ENCODE measurements at regions of chr1 and their contacts with region 1.

Region 1: DNA sequence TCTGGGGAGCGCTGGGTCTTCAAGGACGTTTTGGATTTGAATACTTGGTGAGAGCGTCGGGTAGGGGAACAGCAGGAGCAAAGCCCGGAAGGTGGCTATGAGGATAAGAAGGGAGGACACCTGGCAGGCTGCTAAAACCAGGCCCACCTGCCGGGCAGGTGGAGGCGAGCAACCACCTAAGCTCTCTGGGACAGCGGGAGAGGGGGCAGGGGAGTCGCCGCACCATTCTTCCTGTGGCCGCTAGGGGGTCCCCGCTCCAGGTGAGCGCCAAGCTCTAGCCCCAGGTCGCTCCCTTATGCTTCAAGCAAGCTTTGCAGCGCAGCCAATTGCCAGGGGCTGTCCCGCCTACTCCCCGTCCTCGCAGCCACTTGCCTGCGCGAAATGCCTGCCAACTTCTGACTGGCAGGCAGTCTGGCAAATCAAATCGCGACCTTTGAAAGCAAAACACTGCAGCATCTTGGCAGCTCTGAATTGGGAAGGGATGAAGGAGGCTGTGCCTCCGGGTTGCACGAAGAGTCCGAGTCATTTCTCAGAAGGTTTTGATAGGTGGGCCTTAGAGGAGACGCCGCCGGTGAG is at the start of gene NIPAL3:
- DNase-seq: peak; percentile 95 to 99 (median 96)
- H3K4me3 ChIP-seq: peak within 1 kb of the TSS; percentile 73
- H3K4me3 Mint-ChIP-seq: peak within 1 kb of the TSS; percentile 91 to 100 (median 97)
- H3K27ac ChIP-seq: peak within 1 kb of the TSS; percentile 27
- H3K27ac Mint-ChIP-seq: peak within 1 kb of the TSS; percentile 46 to 97 (median 92)
- H3K4me1 ChIP-seq: peaks cover 52% of the 10 kb centered on the region
- H3K4me1 Mint-ChIP-seq: peaks cover 51 to 77% (median 75%) of the 10 kb centered on the region in 3 donors
- H3K27me3 ChIP-seq: no peaks in the 10 kb centered on the region
- H3K27me3 Mint-ChIP-seq: no peaks in the 10 kb centered on the region
- total RNA-seq, gene NIPAL3: 31.3 to 33.2 TPM

Region 2: DNA sequence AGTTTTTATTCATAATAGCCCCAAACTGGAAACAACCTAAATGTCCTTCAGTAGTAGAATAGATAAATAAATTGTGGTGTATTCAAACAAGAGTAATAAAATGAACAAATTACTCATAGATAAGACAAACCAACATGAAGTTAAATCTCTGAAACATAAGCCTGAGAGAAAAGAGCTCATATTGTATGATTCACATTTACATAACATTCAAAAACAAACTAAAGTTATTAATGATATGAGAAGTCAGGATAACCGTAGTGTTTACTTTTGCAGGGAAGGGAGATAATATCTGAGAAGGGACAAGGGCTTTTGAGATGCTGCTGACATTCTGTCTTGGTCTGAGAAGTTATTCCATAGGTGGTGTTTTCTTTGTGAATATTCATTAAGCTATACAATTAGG is 15.3 kb before region 1 on chr1:
- CTCF ChIA-PET with region 1: interaction called, 12 read pairs
- POLR2A ChIA-PET with region 1: no interaction called
- DNase-seq: no peak
- H3K4me3 ChIP-seq: no peak overlapping the region
- H3K4me3 Mint-ChIP-seq: no peak overlapping the region
- H3K27ac ChIP-seq: no peak overlapping the region
- H3K27ac Mint-ChIP-seq: peak overlapping the region in 2 of 8 donors; percentile 14 to 91
- H3K4me1 ChIP-seq: no peaks in the 10 kb centered on the region
- H3K4me1 Mint-ChIP-seq: no peaks in the 10 kb centered on the region
- H3K27me3 ChIP-seq: no peaks in the 10 kb centered on the region
- H3K27me3 Mint-ChIP-seq: no peaks in the 10 kb centered on the region

Region 3: GRCh38 chr1:24481101-24481500 is 65.7 kb after region 1 on chr1:
- CTCF ChIA-PET with region 1: interaction called, 10 read pairs
- POLR2A ChIA-PET with region 1: interaction called, 7 read pairs
- DNase-seq: peak; percentile 6 to 77 (median 52)
- H3K4me3 ChIP-seq: peak overlapping the region; percentile 32
- H3K4me3 Mint-ChIP-seq: peak overlapping the region; percentile 44 to 84 (median 83)
- H3K27ac ChIP-seq: peak overlapping the region; percentile 32
- H3K27ac Mint-ChIP-seq: peak overlapping the region; percentile 94 to 99 (median 98)
- H3K4me1 ChIP-seq: peaks cover 64% of the 10 kb centered on the region
- H3K4me1 Mint-ChIP-seq: peaks cover 50 to 65% (median 51%) of the 10 kb centered on the region in 3 donors
- H3K27me3 ChIP-seq: no peaks in the 10 kb centered on the region
- H3K27me3 Mint-ChIP-seq: peaks cover 0 to 2% of the 10 kb centered on the region in 2 donors

Region 4: GRCh38 chr1:24526940-24527542 is 111.6 kb after region 1 on chr1:
- CTCF ChIA-PET with region 1: interaction called, 50 read pairs
- POLR2A ChIA-PET with region 1: no interaction called
- DNase-seq: peak; percentile 8 to 54 (median 34)
- H3K4me3 ChIP-seq: no peak overlapping the region
- H3K4me3 Mint-ChIP-seq: no peak overlapping the region
- H3K27ac ChIP-seq: no peak overlapping the region
- H3K27ac Mint-ChIP-seq: peak overlapping the region in 6 of 8 donors; percentile 61 to 93 (median 74)
- H3K4me1 ChIP-seq: peaks cover 40% of the 10 kb centered on the region
- H3K4me1 Mint-ChIP-seq: peaks cover 32 to 72% (median 62%) of the 10 kb centered on the region in 3 donors
- H3K27me3 ChIP-seq: no peaks in the 10 kb centered on the region
- H3K27me3 Mint-ChIP-seq: no peaks in the 10 kb centered on the region

Region 5: DNA sequence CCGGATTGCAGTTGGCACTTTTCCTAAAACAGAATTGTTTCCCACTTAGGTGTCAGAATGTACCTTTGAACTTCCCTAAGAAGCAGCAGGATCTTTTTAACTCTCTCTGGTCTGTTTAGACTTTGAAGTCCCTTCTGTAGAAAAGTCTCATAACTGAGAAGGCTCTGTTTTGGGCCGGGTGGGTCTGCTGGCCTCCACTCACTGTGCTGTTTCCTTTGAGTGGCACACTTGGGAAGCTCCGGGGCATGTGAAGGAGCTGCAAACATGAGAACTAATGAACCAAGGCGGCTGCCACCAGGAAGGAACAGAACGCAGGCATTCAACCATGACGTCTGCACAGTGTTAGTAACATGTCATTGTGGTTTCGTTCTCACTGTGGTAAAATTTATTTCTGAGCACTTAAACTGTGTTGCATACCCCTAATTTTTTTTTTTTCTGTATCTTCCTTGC is 121.0 kb after region 1 on chr1:
- CTCF ChIA-PET with region 1: interaction called, 23 read pairs
- POLR2A ChIA-PET with region 1: interaction called, 7 read pairs
- DNase-seq: peak; percentile 58 to 89 (median 86)
- H3K4me3 ChIP-seq: peak overlapping the region; percentile 30
- H3K4me3 Mint-ChIP-seq: peak overlapping the region; percentile 81 to 90 (median 84)
- H3K27ac ChIP-seq: peak overlapping the region; percentile 49
- H3K27ac Mint-ChIP-seq: peak overlapping the region; percentile 96 to 100 (median 99)
- H3K4me1 ChIP-seq: peaks cover 33% of the 10 kb centered on the region
- H3K4me1 Mint-ChIP-seq: peaks cover 57 to 81% (median 72%) of the 10 kb centered on the region in 3 donors
- H3K27me3 ChIP-seq: no peaks in the 10 kb centered on the region
- H3K27me3 Mint-ChIP-seq: no peaks in the 10 kb centered on the region

Region 6: GRCh38 chr1:24586970-24587820 is 171.8 kb after region 1 on chr1:
- CTCF ChIA-PET with region 1: interaction called, 76 read pairs
- POLR2A ChIA-PET with region 1: interaction called, 8 read pairs
- DNase-seq: peak; percentile 11 to 77 (median 63)
- H3K4me3 ChIP-seq: no peak overlapping the region
- H3K4me3 Mint-ChIP-seq: peak overlapping the region in 2 of 7 donors; percentile 28 to 34
- H3K27ac ChIP-seq: no peak overlapping the region
- H3K27ac Mint-ChIP-seq: peak overlapping the region; percentile 2 to 88 (median 66)
- H3K4me1 ChIP-seq: peaks cover 4% of the 10 kb centered on the region
- H3K4me1 Mint-ChIP-seq: peaks cover 5 to 8% (median 6%) of the 10 kb centered on the region in 3 donors
- H3K27me3 ChIP-seq: peaks cover 9% of the 10 kb centered on the region
- H3K27me3 Mint-ChIP-seq: peaks cover 5 to 8% of the 10 kb centered on the region in 2 donors